ENCODE measurements at regions of chr20 and their contacts with region 1.

Region 1: GRCh38 chr20:36745927-36746659 is at the start of gene NDRG3:
- DNase-seq: peak; percentile 90
- H3K4me3 Mint-ChIP-seq: peak within 1 kb of the TSS; percentile 85
- H3K27ac Mint-ChIP-seq: peak within 1 kb of the TSS; percentile 72
- H3K4me1 Mint-ChIP-seq: peaks cover 24% of the 10 kb centered on the region
- H3K27me3 Mint-ChIP-seq: no peaks in the 10 kb centered on the region
- total RNA-seq, gene NDRG3: 26.0 and 26.8 TPM in 2 replicates

Region 2: DNA sequence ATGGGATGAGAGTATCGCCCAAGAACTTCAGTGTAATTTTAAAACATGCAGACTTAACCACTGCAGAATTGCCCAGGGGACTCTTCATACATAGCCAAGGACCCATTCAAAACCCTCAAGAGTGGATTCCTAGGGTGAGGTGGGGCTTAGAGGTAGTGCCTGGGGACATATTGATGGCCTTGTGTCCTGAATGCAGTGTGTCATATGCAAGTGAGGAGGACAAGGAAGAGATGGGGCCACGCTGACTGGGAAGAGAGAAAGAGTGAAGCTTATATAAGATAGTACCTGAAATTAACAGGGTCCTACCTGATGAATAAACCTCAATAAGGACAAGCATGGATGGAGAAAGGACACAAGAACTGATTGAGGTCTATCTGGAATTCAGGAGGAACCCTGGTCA is 190.8 kb before region 1 on chr20:
- intact Hi-C with region 1: no loop called
- DNase-seq: no peak
- H3K4me3 Mint-ChIP-seq: no peak overlapping the region
- H3K27ac Mint-ChIP-seq: no peak overlapping the region
- H3K4me1 Mint-ChIP-seq: peaks cover 10% of the 10 kb centered on the region
- H3K27me3 Mint-ChIP-seq: no peaks in the 10 kb centered on the region

Region 3: GRCh38 chr20:36773597-36774390 is 27.7 kb after region 1 on chr20 and contains the start of gene DSN1:
- intact Hi-C with region 1: loop called (anchors 2 kb)
- DNase-seq: peak; percentile 98
- H3K4me3 Mint-ChIP-seq: peak within 1 kb of the TSS; percentile 92
- H3K27ac Mint-ChIP-seq: peak within 1 kb of the TSS; percentile 98
- H3K4me1 Mint-ChIP-seq: peaks cover 26% of the 10 kb centered on the region
- H3K27me3 Mint-ChIP-seq: no peaks in the 10 kb centered on the region
- total RNA-seq, gene DSN1: 24.0 and 28.6 TPM in 2 replicates

Region 4: GRCh38 chr20:36830791-36831691 is 84.9 kb after region 1 on chr20:
- intact Hi-C with region 1: no loop called
- DNase-seq: no peak
- H3K4me3 Mint-ChIP-seq: no peak overlapping the region
- H3K27ac Mint-ChIP-seq: no peak overlapping the region
- H3K4me1 Mint-ChIP-seq: peaks cover 24% of the 10 kb centered on the region
- H3K27me3 Mint-ChIP-seq: no peaks in the 10 kb centered on the region